ENCODE measurements at regions of chr11 and their contacts with region 1.

Region 1: DNA sequence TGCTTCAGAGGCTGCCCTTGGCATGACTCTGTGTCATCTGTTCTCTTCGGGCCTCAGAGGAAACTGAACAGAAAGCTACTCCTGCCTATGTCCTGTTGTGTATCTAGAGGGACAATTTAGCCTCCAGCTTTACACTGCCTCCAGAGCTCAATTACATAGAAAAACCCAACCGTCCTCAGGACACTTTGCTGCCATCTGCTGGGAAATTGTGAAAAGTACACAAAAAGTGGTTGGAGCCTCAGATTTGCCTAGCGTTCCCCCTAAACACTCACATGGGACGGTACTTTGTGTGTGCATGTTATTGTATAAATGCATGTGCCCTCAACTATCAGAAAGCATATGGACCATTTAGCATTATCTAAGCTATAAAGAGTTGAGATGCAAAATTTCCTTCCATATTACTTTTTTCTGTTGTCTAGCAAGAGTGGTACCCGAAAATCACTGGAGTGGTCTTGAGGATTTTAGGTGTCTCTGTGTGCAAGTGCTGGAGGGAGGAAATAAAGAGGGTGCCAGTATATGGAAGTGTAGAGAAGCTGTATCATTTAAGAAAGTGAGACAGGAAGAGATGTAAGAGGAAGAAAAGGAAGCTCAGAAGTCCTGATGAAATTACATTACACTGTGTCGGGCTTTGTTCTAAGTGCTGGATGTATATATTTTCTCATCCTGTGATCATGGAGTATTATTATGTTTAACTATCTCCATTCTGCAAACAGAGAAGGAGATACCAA is 8.7 kb upstream of the MS4A4E start:
- DNase-seq: no peak
- ATAC-seq: peak in 1 of 2 donors; percentile 43
- H3K4me3 ChIP-seq: no peak overlapping the region
- H3K27ac ChIP-seq: no peak overlapping the region
- H3K4me1 ChIP-seq: no peaks in the 10 kb centered on the region
- H3K27me3 ChIP-seq: no peaks in the 10 kb centered on the region

Region 2: GRCh38 chr11:60098508-60098907 is 153.1 kb before region 1 on chr11:
- intact Hi-C with region 1: loop called in 1 of 4 experiments (anchors 5 kb)
- DNase-seq: no peak
- ATAC-seq: no peak
- H3K4me3 ChIP-seq: no peak overlapping the region
- H3K27ac ChIP-seq: no peak overlapping the region
- H3K4me1 ChIP-seq: no peaks in the 10 kb centered on the region
- H3K27me3 ChIP-seq: no peaks in the 10 kb centered on the region

Region 3: GRCh38 chr11:60389279-60389910 is 137.7 kb after region 1 on chr11:
- intact Hi-C with region 1: no loop called
- DNase-seq: no peak
- ATAC-seq: peak; percentile 59 to 70
- H3K4me3 ChIP-seq: no peak overlapping the region
- H3K27ac ChIP-seq: no peak overlapping the region
- H3K4me1 ChIP-seq: no peaks in the 10 kb centered on the region
- H3K27me3 ChIP-seq: no peaks in the 10 kb centered on the region